Activated naive CD4-positive, alpha-beta T cell treated with anti-CD3 and anti-CD28 coated beads, Interleukin-2, amount 10 ng/mL, durations not matched to agents 7 days and 5 days (primary cell): ENCODE measurements at regions of chr2 and their contacts with region 1.

Region 1: GRCh38 chr2:168118733-168119514 is 128.5 kb downstream of the STK39 start:
- DNase-seq: no peak
- H3K4me3 Mint-ChIP-seq: no peak overlapping the region
- H3K27ac Mint-ChIP-seq: no peak overlapping the region
- H3K4me1 Mint-ChIP-seq: no peaks in the 10 kb centered on the region
- H3K27me3 Mint-ChIP-seq: no peaks in the 10 kb centered on the region

Region 2: DNA sequence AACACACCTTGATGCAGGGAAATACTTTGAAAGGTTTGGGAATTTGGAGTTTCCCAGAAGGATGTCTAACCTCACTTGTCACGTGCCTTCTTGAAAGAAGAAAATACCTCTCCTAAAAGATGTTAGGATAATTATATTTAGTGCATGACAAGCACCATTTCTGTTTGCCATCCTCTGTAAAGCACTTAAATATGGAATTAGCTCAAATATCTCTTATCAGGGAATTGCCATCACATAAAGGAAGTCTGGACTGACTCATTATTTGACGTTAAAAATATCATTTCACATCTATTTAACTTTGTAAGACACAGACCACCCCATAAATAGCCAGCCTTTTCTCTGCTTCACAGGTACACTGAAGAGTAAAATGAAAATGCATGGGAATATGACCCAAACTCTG is 11.6 kb before region 1 on chr2:
- CTCF ChIA-PET with region 1: interaction called, 16 read pairs
- DNase-seq: no peak
- H3K4me3 Mint-ChIP-seq: no peak overlapping the region
- H3K27ac Mint-ChIP-seq: no peak overlapping the region
- H3K4me1 Mint-ChIP-seq: no peaks in the 10 kb centered on the region
- H3K27me3 Mint-ChIP-seq: no peaks in the 10 kb centered on the region